ENCODE measurements at regions of chr2 and their contacts with region 1.

Region 1: GRCh38 chr2:85888684-85889626 is at the start of gene ST3GAL5:
- DNase-seq: no peak
- H3K4me3 ChIP-seq: peak within 1 kb of the TSS; percentile 64
- CTCF ChIP-seq: peak; percentile 85

Region 2: DNA sequence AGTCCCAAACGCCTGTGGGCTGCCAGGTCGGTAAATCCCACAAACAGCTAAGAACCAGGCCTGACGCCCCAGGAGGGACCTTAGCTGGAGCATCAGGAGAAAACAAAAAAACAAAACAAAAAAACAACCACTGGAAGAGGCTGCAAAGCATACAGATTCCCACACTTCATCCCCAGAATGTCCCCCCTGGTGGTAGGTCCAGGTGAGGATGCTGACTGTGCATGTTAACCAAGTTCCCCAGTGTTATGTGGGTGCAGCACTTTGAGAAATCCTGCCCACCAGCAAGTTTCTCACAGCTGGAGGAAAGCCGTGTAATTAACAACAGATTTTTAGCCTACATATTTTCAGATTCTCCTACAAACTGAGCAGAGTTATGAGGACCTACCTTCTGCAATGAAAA is 15.3 kb before region 1 on chr2:
- CTCF ChIA-PET with region 1: interaction called, 30 read pairs
- POLR2A ChIA-PET with region 1: interaction called, 4 read pairs
- DNase-seq: no peak
- H3K4me3 ChIP-seq: no peak overlapping the region
- CTCF ChIP-seq: peak; percentile 17

Region 3: GRCh38 chr2:85902496-85902895 is 13.5 kb after region 1 on chr2:
- CTCF ChIA-PET with region 1: interaction called, 40 read pairs
- POLR2A ChIA-PET with region 1: interaction called, 7 read pairs
- DNase-seq: no peak
- H3K4me3 ChIP-seq: no peak overlapping the region
- CTCF ChIP-seq: no peak

Region 4: GRCh38 chr2:85920810-85921545 is 32.0 kb after region 1 on chr2:
- CTCF ChIA-PET with region 1: interaction called, 14 read pairs
- POLR2A ChIA-PET with region 1: interaction called, 3 read pairs
- DNase-seq: no peak
- H3K4me3 ChIP-seq: no peak overlapping the region
- CTCF ChIP-seq: no peak

Region 5: DNA sequence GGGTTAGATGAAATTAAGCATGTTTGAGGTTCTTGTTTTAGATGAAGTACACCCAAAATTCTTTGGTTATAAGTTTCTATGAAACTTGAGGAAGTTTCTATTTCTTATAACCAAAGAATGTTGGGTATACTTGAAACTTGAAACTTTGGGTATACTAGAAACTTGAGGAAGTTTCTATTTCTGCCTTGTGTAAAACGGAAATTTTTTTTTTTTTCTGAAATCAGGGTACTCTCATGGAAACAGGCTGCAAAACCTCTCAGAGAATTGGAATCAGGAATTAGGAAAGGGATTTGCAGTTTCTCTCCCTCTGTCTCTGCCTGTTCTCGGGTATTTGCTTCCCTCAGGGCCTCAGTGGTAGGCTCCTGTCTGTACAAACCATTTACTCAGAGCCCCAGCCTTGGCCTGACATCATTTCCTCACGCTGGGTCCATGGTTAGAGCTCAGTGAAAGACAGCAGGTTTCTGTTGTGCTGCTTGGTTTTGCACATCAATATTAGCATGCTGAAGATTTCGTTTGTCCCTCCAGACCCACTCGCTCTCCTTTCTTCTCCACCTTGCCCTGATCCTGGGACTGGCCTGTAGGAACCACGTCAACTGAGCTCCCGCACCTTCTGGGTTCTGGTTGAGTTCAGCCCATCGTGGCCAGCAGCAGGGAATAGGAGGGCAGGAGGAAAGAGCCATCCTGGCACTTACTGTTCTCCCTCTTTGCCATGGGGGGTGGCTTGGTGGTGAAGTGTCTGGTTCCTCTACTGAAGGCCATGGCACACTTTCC is 110.3 kb after region 1 on chr2:
- CTCF ChIA-PET with region 1: interaction called, 27 read pairs
- POLR2A ChIA-PET with region 1: interaction called, 7 read pairs
- DNase-seq: no peak
- H3K4me3 ChIP-seq: no peak overlapping the region
- CTCF ChIP-seq: no peak